CD4-positive, alpha-beta memory T cell (primary cell): ENCODE measurements at regions of chr12 and their contacts with region 1.

Region 1: GRCh38 chr12:2877047-2877952 is at the starts of genes FOXM1 and RHNO1:
- DNase-seq: peak; percentile 88 to 92 (median 89)
- H3K4me3 ChIP-seq: peak within 1 kb of the TSS; percentile 92 to 98
- H3K4me3 Mint-ChIP-seq: peak within 1 kb of the TSS; percentile 97 to 100 (median 99)
- H3K27ac ChIP-seq: peak within 1 kb of the TSS; percentile 96
- H3K27ac Mint-ChIP-seq: peak within 1 kb of the TSS; percentile 98 to 100 (median 99)
- H3K4me1 ChIP-seq: peaks cover 38% of the 10 kb centered on the region
- H3K4me1 Mint-ChIP-seq: peaks cover 25 to 44% (median 33%) of the 10 kb centered on the region in 4 donors
- H3K27me3 ChIP-seq: no peaks in the 10 kb centered on the region
- H3K27me3 Mint-ChIP-seq: no peaks in the 10 kb centered on the region
- total RNA-seq, gene FOXM1: 0.30 to 0.44 TPM
- total RNA-seq, gene RHNO1: 31.2 to 35.7 TPM

Region 2: GRCh38 chr12:1690578-1691122 is 1186.7 kb before region 1 on chr12 and contains the start of gene ADIPOR2:
- CTCF ChIA-PET with region 1: no interaction called
- POLR2A ChIA-PET with region 1: no interaction called
- intact Hi-C with region 1: loop called (anchors 2 kb)
- DNase-seq: peak; percentile 93 to 95 (median 94)
- H3K4me3 ChIP-seq: peak within 1 kb of the TSS; percentile 70 to 87
- H3K4me3 Mint-ChIP-seq: peak within 1 kb of the TSS; percentile 88 to 97 (median 93)
- H3K27ac ChIP-seq: peak within 1 kb of the TSS; percentile 73
- H3K27ac Mint-ChIP-seq: peak within 1 kb of the TSS; percentile 96 to 99 (median 99)
- H3K4me1 ChIP-seq: peaks cover 27% of the 10 kb centered on the region
- H3K4me1 Mint-ChIP-seq: peaks cover 26 to 53% (median 35%) of the 10 kb centered on the region in 4 donors
- H3K27me3 ChIP-seq: no peaks in the 10 kb centered on the region
- H3K27me3 Mint-ChIP-seq: peaks cover 0 to 1% of the 10 kb centered on the region in 2 donors
- total RNA-seq, gene ADIPOR2: 35.7 to 36.2 TPM

Region 3: DNA sequence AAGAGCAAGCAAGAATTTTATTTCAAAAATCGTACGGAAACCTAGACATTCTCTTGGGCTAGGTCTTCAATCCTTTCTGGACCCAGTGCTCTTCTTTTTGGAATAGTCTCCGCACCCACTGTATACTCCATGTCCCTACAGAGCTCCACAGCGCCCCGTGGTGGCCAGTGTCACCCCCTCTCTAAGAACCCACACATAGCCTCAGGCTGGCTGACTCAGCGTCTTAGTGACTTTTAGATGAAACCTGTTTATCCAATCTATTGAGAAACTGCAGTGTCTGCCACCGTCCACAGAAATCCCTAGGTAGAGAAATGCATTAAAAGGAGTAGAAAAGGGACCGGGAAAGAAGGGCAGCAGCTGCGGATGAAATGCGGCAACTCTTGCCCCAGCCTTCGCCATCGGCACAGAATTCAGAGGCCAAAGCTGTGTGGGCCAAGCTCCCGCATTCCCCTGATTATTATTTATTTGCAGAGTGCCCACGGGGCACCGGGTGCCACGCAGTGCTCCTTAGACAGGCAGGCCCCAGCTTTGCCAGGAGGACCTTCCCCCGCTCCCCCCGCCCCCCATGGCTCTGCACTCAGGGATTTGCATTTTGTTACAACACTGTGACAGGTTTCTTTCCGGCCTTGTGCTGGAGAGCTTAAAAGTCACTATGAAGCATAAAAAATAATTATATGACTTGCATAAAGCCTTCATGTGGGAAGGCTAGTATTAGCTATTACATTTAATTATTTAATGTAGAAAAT is 252.6 kb before region 1 on chr12:
- CTCF ChIA-PET with region 1: no interaction called
- POLR2A ChIA-PET with region 1: no interaction called
- intact Hi-C with region 1: no loop called
- DNase-seq: no peak
- H3K4me3 ChIP-seq: no peak overlapping the region
- H3K4me3 Mint-ChIP-seq: no peak overlapping the region
- H3K27ac ChIP-seq: no peak overlapping the region
- H3K27ac Mint-ChIP-seq: no peak overlapping the region
- H3K4me1 ChIP-seq: no peaks in the 10 kb centered on the region
- H3K4me1 Mint-ChIP-seq: no peaks in the 10 kb centered on the region
- H3K27me3 ChIP-seq: no peaks in the 10 kb centered on the region
- H3K27me3 Mint-ChIP-seq: peaks cover 16 to 23% of the 10 kb centered on the region in 2 donors

Region 4: DNA sequence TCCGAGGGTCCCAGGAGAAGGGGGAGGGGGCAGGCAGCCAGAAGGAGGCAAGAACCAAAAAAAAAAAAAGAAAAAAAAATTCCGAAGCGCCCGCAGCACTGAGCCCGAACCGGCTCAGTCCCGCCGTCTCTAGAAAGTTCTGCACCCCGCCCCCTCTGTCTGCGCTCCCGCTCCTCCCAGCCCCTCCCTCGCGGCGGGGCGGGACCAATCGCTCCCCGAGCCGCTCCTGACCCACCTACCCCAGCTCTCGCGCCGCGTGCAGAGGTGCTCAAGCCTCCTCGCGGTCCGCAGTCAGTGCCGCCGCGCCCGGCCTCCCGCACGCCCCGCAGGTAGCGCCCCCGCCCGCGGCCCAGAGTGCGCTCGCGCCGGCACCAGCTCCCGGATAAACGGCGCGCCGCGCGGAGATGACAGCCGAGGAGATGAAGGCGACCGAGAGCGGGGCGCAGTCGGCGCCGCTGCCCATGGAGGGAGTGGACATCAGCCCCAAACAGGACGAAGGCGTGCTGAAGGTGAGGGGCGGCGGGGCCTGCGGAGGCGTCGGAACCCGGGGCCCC is 82.5 kb before region 1 on chr12 and contains the start of gene FKBP4:
- CTCF ChIA-PET with region 1: no interaction called
- POLR2A ChIA-PET with region 1: interaction called, 13 read pairs
- intact Hi-C with region 1: loop called (anchors 1 kb)
- DNase-seq: peak; percentile 83 to 92 (median 86)
- H3K4me3 ChIP-seq: peak within 1 kb of the TSS; percentile 81 to 83
- H3K4me3 Mint-ChIP-seq: peak within 1 kb of the TSS; percentile 91 to 97 (median 94)
- H3K27ac ChIP-seq: peak within 1 kb of the TSS; percentile 55
- H3K27ac Mint-ChIP-seq: peak within 1 kb of the TSS; percentile 77 to 96 (median 90)
- H3K4me1 ChIP-seq: peaks cover 11% of the 10 kb centered on the region
- H3K4me1 Mint-ChIP-seq: peaks cover 11 to 36% (median 14%) of the 10 kb centered on the region in 4 donors
- H3K27me3 ChIP-seq: no peaks in the 10 kb centered on the region
- H3K27me3 Mint-ChIP-seq: no peaks in the 10 kb centered on the region
- total RNA-seq, gene FKBP4: 51.3 to 53.3 TPM

Region 5: GRCh38 chr12:2890388-2891239 is 13.3 kb after region 1 on chr12 and contains the start of gene TULP3:
- CTCF ChIA-PET with region 1: interaction called, 9 read pairs
- POLR2A ChIA-PET with region 1: interaction called, 52 read pairs
- intact Hi-C with region 1: loop called (anchors 1 kb)
- DNase-seq: peak; percentile 98 to 99 (median 98)
- H3K4me3 ChIP-seq: peak within 1 kb of the TSS; percentile 49 to 92
- H3K4me3 Mint-ChIP-seq: peak within 1 kb of the TSS; percentile 90 to 99 (median 96)
- H3K27ac ChIP-seq: peak within 1 kb of the TSS; percentile 83
- H3K27ac Mint-ChIP-seq: peak within 1 kb of the TSS; percentile 90 to 99 (median 93)
- H3K4me1 ChIP-seq: peaks cover 17% of the 10 kb centered on the region
- H3K4me1 Mint-ChIP-seq: peaks cover 17 to 37% (median 25%) of the 10 kb centered on the region in 4 donors
- H3K27me3 ChIP-seq: no peaks in the 10 kb centered on the region
- H3K27me3 Mint-ChIP-seq: peaks cover 0 to 2% of the 10 kb centered on the region in 2 donors
- total RNA-seq, gene TULP3: 6.7 to 9.1 TPM